ENCODE measurements at regions of chr19 and their contacts with region 1.

Region 1: DNA sequence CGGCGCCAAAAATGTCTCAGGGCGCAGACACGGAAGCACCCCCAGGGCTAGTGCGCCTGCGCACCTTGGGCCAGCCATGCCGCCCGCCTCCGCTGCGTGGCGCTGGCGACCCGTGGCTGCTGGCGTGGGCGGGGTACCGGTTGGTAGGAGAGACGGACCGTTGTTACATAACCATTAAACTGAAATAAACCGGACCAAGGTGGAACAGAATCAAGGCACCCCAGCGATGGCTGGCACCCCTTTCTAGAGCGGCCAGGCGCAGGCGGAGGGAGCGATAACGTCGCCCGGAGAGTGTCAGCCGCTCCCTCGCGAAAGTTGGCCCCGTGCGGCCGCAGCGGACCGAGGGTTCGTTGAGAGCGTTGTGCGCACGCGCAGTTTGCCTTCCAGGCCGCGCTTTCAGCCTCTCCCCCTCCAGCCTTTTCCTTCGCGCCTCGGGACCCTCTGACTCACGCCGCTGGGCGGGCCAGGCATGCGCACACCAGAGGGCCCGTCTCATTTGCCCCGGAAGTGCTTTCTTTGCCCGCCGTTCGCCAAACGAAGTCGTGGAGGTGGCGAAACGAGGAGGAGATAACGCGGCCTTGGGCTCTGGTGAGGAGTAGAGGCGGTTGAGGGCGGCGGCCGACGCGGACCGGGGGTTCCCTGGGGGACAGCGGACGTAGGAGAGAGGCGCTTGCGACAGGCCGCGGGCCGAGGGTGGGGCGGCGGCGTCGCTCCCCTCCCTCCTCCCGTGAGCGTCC is at the starts of genes PLEKHJ1 and SF3A2:
- DNase-seq: peak; percentile 98
- H3K4me3 Mint-ChIP-seq: peak within 1 kb of the TSS; percentile 99
- H3K27ac Mint-ChIP-seq: peak within 1 kb of the TSS; percentile 98
- H3K4me1 Mint-ChIP-seq: peaks cover 64% of the 10 kb centered on the region
- H3K27me3 Mint-ChIP-seq: no peaks in the 10 kb centered on the region
- total RNA-seq, gene PLEKHJ1: 56.9 to 60.6 TPM
- total RNA-seq, gene SF3A2: 154 to 158 TPM

Region 2: GRCh38 chr19:2041683-2042484 is 194.6 kb before region 1 on chr19:
- CTCF ChIA-PET with region 1: no interaction called
- intact Hi-C with region 1: loop called (anchors 1 kb)
- DNase-seq: peak; percentile 99
- H3K4me3 Mint-ChIP-seq: peak overlapping the region; percentile 81
- H3K27ac Mint-ChIP-seq: peak overlapping the region; percentile 92
- H3K4me1 Mint-ChIP-seq: peaks cover 31% of the 10 kb centered on the region
- H3K27me3 Mint-ChIP-seq: no peaks in the 10 kb centered on the region

Region 3: DNA sequence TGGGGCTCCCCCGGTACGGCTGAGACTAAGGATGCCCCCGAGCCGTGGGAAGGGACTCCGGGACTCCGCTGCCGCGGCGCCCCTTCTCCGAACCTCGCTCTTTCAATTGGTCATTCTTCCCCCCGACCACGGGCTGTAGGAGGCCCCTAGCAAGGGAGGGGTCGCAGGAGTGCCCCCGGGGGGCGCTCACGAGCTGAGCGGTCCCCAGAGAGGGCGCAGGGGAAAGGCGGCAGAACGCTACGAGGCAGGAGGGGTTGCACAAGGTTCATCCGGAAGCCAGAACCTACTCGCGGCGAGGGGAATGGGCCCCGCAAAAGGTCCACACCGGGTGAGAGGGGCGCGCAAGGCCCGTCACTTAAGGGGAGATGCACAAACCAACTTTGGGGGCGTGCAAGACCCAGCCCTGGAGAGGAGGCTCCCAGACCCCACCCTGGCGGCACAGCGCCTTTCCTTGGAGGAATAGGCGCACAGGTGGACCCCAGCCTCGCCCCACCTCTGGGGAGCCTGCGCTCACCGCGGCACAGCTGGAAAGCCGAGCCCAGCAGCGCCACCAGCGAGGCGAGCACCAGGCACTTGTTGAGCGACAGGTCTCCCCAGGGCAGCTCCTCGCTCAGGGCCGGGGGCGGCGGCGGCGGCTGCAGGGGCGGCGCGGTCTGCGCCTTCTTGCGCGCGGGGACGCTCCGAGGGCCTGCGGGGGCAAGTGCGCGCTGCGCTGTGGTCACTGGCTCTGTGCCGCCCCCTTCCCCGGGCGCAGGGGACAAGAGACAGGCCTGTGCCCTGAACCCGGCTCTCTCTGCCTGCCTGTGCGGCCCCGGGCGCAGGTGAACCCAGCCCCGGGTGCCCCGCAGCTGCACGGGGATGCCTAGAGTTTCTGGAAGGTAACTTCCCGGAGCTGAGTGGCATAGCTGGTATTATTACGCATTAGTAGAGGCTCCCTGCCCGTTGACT is 16.9 kb after region 1 on chr19:
- CTCF ChIA-PET with region 1: interaction called, 14 read pairs
- intact Hi-C with region 1: loop called (anchors 1 kb)
- DNase-seq: peak; percentile 59
- H3K4me3 Mint-ChIP-seq: peak overlapping the region; percentile 43
- H3K27ac Mint-ChIP-seq: no peak overlapping the region
- H3K4me1 Mint-ChIP-seq: peaks cover 28% of the 10 kb centered on the region
- H3K27me3 Mint-ChIP-seq: peaks cover 12% of the 10 kb centered on the region

Region 4: DNA sequence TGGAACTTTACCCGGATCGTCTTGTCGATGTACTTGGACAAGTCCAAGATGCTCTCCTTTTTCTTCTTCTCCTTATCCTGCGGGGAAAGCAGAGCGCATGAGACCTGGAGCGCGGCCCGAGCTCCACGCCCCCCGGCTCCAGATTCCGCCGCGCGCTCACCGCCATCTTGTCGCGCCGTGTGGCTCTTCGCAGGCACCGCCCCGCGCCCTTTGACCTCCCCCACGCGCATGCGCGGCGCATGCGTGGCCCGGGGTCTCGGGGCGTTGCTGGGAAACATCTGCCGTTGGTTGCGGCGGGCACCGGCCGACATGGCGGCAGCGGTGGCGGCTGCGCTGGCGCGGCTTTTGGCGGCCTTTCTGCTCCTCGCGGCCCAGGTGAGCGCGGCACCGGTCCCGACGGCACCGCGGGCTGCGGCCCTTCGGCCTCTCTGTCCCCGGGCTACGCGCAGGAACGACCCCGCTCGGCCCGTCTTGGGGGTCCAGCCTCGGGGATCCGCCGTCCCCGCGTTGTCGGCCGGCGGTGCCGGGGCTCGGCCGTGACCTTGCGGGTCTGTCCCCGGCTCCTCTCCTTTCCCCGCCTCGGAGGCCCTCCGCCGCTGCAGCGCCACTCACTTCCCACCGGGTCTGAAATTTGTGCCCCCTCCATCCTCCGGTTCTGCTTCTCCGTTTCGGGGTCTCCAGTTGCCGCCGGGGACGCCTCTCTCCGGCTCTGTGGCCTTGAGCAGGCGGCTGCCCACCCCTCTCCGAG is 92.1 kb after region 1 on chr19 and contains the starts of genes LSM7 and SPPL2B:
- CTCF ChIA-PET with region 1: no interaction called
- intact Hi-C with region 1: loop called (anchors 1 kb)
- DNase-seq: peak; percentile 92
- H3K4me3 Mint-ChIP-seq: peak within 1 kb of the TSS; percentile 96
- H3K27ac Mint-ChIP-seq: peak within 1 kb of the TSS; percentile 94
- H3K4me1 Mint-ChIP-seq: peaks cover 72% of the 10 kb centered on the region
- H3K27me3 Mint-ChIP-seq: no peaks in the 10 kb centered on the region
- total RNA-seq, gene LSM7: 162 to 164 TPM
- total RNA-seq, gene SPPL2B: 56.8 to 59.6 TPM

Region 5: DNA sequence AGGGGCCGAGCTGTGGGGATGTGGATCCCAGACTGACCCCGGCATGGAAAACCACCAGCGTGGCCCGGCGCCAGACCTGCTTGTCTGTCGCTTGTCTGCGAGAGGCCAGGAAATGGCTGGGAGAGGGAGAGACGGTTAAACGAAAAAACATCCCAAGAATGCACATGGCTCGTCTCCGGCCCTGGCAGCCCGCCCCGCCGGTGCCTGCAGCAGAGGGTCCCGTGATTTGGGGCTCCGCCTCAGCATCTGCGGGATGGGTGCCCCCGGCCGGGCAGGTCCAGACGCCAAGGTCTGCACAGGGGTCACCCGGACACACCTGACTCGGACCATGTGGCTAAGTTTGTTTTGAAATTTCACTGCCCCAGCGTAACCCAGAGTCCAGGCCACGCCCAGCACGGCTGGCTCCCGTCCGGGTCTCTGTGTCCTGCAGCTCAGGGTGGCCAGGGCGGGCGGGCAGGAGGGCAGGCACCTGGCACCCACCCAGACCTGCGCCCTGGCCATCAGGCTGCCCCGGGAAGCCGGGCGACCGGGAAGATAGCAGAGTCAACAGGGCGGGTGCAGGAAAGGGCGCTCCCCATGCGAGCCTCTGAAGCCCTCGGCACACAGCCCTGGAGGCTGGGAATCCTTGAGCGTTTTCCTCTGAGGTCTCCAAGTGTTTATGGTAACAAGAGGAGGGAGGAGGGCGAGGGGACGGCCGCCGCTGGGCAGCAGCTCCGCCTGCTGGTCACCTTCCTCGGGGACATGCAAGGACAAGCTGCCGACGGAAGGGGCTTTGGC is 342.6 kb after region 1 on chr19:
- CTCF ChIA-PET with region 1: no interaction called
- intact Hi-C with region 1: no loop called
- DNase-seq: peak; percentile 80
- H3K4me3 Mint-ChIP-seq: peak overlapping the region; percentile 53
- H3K27ac Mint-ChIP-seq: no peak overlapping the region
- H3K4me1 Mint-ChIP-seq: peaks cover 3% of the 10 kb centered on the region
- H3K27me3 Mint-ChIP-seq: peaks cover 3% of the 10 kb centered on the region

Region 6: DNA sequence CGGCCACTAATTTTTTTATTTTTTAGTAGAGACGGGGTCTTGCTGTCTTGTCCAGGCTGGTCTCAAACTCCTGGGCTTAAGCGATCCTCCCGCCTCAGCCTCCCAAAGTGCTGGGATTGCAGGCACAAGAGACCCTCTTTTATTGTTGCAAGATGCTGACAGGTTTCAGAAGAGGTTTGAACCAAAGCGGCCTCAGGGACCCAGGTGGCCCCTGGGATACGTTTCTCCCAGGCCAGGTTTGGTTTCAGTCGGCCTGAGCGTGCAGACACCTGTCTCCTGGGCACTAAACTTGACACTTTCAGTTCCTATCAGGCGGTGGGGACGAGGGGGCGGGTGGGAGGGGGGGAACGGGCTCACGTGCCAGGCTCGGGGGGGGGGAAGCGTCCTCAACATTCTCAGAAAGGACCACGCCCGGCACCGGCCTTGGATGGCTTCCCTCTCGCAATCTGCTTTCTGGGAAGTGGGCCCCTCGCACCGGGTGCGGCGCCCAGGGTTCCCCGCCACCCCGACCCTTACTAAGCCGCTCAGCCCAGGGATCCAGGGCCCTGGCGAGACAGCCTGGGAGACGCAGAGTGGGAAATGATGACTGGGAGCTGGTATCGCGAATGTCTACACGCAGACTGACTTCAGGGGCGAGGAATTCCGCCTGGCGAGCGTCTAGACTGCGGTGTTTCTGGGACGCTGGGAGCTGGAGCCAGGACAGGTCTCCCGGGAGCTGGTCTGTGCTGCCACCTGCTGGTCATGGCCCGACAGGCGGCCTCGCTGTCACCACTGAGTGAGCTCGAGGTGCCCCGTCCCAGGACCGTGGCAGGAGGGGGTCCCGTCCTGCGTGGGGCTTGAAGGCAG is 374.4 kb after region 1 on chr19:
- CTCF ChIA-PET with region 1: no interaction called
- intact Hi-C with region 1: loop called (anchors 5 kb)
- DNase-seq: peak; percentile 95
- H3K4me3 Mint-ChIP-seq: peak overlapping the region; percentile 81
- H3K27ac Mint-ChIP-seq: peak overlapping the region; percentile 81
- H3K4me1 Mint-ChIP-seq: peaks cover 46% of the 10 kb centered on the region
- H3K27me3 Mint-ChIP-seq: peaks cover 4% of the 10 kb centered on the region

Measured in activated naive CD4-positive, alpha-beta T cell treated with anti-CD3 and anti-CD28 coated beads for 36 hours (primary cell).